ENCODE measurements at regions of chr13 and their contacts with region 1.

Region 1: DNA sequence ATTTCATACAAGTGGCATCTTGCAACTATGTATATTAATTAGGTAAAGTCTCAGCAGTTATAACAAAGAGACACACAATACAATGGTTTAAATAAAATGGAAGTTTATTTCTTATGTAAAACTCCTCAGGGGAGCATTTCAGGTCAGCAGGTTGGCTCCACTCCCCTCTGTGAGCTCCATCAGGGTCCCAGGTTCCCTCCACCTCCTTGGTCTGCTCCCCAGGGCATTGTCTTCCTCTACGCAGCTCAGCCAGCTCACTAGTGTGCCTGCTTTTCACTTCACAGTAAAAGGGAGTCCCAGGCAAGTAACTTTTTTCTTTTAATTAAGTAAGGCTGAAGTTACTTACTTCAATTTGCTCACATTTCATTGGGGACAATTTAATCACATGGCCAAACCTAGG is 135.3 kb upstream of the FNDC3A start:
- DNase-seq: no peak
- H3K4me3 ChIP-seq: no peak overlapping the region
- H3K27ac ChIP-seq: no peak overlapping the region
- H3K4me1 ChIP-seq: no peaks in the 10 kb centered on the region
- H3K27me3 ChIP-seq: no peaks in the 10 kb centered on the region
- CTCF ChIP-seq: no peak

Region 2: DNA sequence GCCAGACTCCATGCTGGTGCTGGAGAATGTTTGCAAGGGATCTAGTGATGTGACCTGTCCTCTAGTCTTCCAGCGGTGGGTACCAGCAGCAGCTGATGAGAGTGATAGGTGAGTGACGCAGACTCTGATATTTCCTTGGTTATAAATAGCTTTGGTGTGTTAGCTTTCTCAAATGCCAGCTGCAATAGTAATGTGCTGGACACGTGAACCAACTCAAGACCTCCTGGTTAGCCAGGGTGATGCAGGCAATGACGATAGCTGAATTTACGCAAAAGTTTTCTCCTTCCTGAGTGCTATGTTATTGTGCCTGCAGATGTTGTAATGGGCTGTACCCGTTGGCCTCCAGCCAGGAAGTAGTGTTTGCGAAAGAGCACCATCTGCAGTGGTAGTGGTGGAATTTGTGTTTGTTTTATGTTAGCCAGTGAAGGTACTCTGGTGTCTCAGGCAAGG is 57.2 kb before region 1 on chr13:
- CTCF ChIA-PET with region 1: no interaction called
- POLR2A ChIA-PET with region 1: no interaction called
- intact Hi-C with region 1: no loop called
- DNase-seq: peak in 1 of 2 experiments; percentile 45
- H3K4me3 ChIP-seq: no peak overlapping the region
- H3K27ac ChIP-seq: no peak overlapping the region
- H3K4me1 ChIP-seq: no peaks in the 10 kb centered on the region
- H3K27me3 ChIP-seq: no peaks in the 10 kb centered on the region
- CTCF ChIP-seq: no peak

Region 3: DNA sequence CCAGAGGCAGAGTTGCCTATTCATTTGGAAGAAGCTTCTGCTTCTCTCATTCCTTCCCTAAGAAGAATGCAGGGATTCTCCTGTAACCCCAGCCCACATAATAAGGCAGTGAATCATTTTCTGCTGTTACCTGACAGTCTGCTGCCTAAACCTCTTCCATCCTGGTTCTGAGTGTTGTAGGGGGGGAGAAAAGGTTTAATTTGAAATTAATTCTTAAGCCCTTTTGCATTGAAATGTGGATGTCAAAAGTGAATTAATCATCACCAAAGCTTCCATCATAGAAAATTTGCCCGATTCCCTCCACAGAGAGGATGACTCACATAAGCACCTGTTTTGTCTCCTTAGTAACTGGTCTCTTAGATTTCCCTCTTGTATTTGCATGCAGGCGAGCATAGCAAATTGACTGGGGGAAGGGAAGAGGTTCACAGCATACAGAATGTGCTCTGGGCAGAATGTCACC is 11.4 kb before region 1 on chr13:
- CTCF ChIA-PET with region 1: no interaction called
- POLR2A ChIA-PET with region 1: interaction called, 14 read pairs
- intact Hi-C with region 1: no loop called
- DNase-seq: peak; percentile 16 to 63
- H3K4me3 ChIP-seq: no peak overlapping the region
- H3K27ac ChIP-seq: no peak overlapping the region
- H3K4me1 ChIP-seq: no peaks in the 10 kb centered on the region
- H3K27me3 ChIP-seq: no peaks in the 10 kb centered on the region
- CTCF ChIP-seq: no peak

Region 4: GRCh38 chr13:48942131-48942530 is 101.8 kb after region 1 on chr13:
- CTCF ChIA-PET with region 1: no interaction called
- POLR2A ChIA-PET with region 1: no interaction called
- intact Hi-C with region 1: no loop called
- DNase-seq: no peak
- H3K4me3 ChIP-seq: no peak overlapping the region
- H3K27ac ChIP-seq: no peak overlapping the region
- H3K4me1 ChIP-seq: no peaks in the 10 kb centered on the region
- H3K27me3 ChIP-seq: no peaks in the 10 kb centered on the region
- CTCF ChIP-seq: no peak

Measured in PC-9 (cell line).